B cell (primary cell): ENCODE measurements at regions of chr2 and their contacts with region 1.

Region 1: DNA sequence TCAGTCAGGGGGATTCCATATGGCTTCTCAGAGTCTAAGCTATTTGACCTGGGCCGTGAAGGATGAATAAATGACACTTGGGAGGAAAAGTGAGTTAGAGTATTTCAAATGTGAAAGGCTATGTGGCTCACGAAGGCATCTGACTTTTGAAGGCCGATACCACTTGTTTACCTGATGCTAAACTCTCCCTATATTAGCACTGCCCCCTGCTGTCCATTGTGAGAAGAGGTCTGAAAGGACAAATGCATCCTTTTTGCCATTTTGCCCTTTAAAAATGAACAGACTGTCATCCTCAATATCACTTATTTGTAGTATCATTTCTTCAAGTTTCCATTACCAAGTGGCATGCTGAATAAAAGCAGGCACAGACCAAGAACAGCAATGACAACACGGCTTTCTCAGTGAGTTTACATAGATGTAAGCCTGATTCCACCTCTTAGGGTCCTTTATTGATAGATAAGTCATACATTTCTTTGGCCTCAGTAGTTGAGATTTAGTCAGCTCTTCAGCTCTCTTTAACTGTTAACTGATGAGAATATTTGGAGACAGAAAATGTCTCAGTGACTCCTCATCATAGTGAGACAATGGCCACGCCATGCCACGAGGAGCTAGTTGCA is 40.1 kb downstream of the DOCK10 start:
- DNase-seq: peak; percentile 83
- ATAC-seq: peak; percentile 68
- H3K4me3 ChIP-seq: no peak overlapping the region
- H3K4me3 Mint-ChIP-seq: peak overlapping the region; percentile 53
- H3K27ac ChIP-seq: peak overlapping the region; percentile 22 to 51
- H3K27ac Mint-ChIP-seq: peak overlapping the region; percentile 90
- H3K4me1 ChIP-seq: peaks cover 19% of the 10 kb centered on the region in 2 donors
- H3K4me1 Mint-ChIP-seq: peaks cover 25% of the 10 kb centered on the region
- H3K27me3 ChIP-seq: no peaks in the 10 kb centered on the region
- H3K27me3 Mint-ChIP-seq: no peaks in the 10 kb centered on the region
- CTCF ChIP-seq: peak; percentile 80

Region 2: GRCh38 chr2:224847961-224848850 is 153.9 kb before region 1 on chr2:
- CTCF ChIA-PET with region 1: interaction called, 18 read pairs
- POLR2A ChIA-PET with region 1: no interaction called
- intact Hi-C with region 1: no loop called
- DNase-seq: no peak
- ATAC-seq: no peak
- H3K4me3 ChIP-seq: no peak overlapping the region
- H3K4me3 Mint-ChIP-seq: no peak overlapping the region
- H3K27ac ChIP-seq: no peak overlapping the region
- H3K27ac Mint-ChIP-seq: no peak overlapping the region
- H3K4me1 ChIP-seq: no peaks in the 10 kb centered on the region
- H3K4me1 Mint-ChIP-seq: no peaks in the 10 kb centered on the region
- H3K27me3 ChIP-seq: no peaks in the 10 kb centered on the region
- H3K27me3 Mint-ChIP-seq: no peaks in the 10 kb centered on the region
- CTCF ChIP-seq: no peak

Region 3: GRCh38 chr2:224922142-224922727 is 79.9 kb before region 1 on chr2:
- CTCF ChIA-PET with region 1: interaction called, 124 read pairs
- POLR2A ChIA-PET with region 1: interaction called, 4 read pairs
- intact Hi-C with region 1: no loop called
- DNase-seq: peak; percentile 63
- ATAC-seq: peak; percentile 64
- H3K4me3 ChIP-seq: peak overlapping the region in 1 of 5 experiments; percentile 4
- H3K4me3 Mint-ChIP-seq: peak overlapping the region; percentile 66
- H3K27ac ChIP-seq: peak overlapping the region; percentile 40 to 54
- H3K27ac Mint-ChIP-seq: peak overlapping the region; percentile 84
- H3K4me1 ChIP-seq: peaks cover 64 to 68% of the 10 kb centered on the region in 2 donors
- H3K4me1 Mint-ChIP-seq: peaks cover 55% of the 10 kb centered on the region
- H3K27me3 ChIP-seq: no peaks in the 10 kb centered on the region
- H3K27me3 Mint-ChIP-seq: no peaks in the 10 kb centered on the region
- CTCF ChIP-seq: no peak

Region 4: GRCh38 chr2:224952936-224953657 is 49.0 kb before region 1 on chr2:
- CTCF ChIA-PET with region 1: interaction called, 54 read pairs
- POLR2A ChIA-PET with region 1: interaction called, 4 read pairs
- intact Hi-C with region 1: loop called (anchors 2 kb)
- DNase-seq: peak; percentile 79
- ATAC-seq: peak; percentile 89
- H3K4me3 ChIP-seq: no peak overlapping the region
- H3K4me3 Mint-ChIP-seq: peak overlapping the region; percentile 50
- H3K27ac ChIP-seq: peak overlapping the region; percentile 19 to 52
- H3K27ac Mint-ChIP-seq: peak overlapping the region; percentile 85
- H3K4me1 ChIP-seq: peaks cover 63 to 64% of the 10 kb centered on the region in 2 donors
- H3K4me1 Mint-ChIP-seq: peaks cover 86% of the 10 kb centered on the region
- H3K27me3 ChIP-seq: no peaks in the 10 kb centered on the region
- H3K27me3 Mint-ChIP-seq: no peaks in the 10 kb centered on the region
- CTCF ChIP-seq: no peak

Region 5: GRCh38 chr2:224990710-224991109 is 11.4 kb before region 1 on chr2:
- CTCF ChIA-PET with region 1: interaction called, 29 read pairs
- POLR2A ChIA-PET with region 1: no interaction called
- intact Hi-C with region 1: no loop called
- DNase-seq: no peak
- ATAC-seq: no peak
- H3K4me3 ChIP-seq: no peak overlapping the region
- H3K4me3 Mint-ChIP-seq: no peak overlapping the region
- H3K27ac ChIP-seq: no peak overlapping the region
- H3K27ac Mint-ChIP-seq: no peak overlapping the region
- H3K4me1 ChIP-seq: peaks cover 4 to 11% of the 10 kb centered on the region in 2 donors
- H3K4me1 Mint-ChIP-seq: peaks cover 21% of the 10 kb centered on the region
- H3K27me3 ChIP-seq: no peaks in the 10 kb centered on the region
- H3K27me3 Mint-ChIP-seq: no peaks in the 10 kb centered on the region
- CTCF ChIP-seq: no peak

Region 6: DNA sequence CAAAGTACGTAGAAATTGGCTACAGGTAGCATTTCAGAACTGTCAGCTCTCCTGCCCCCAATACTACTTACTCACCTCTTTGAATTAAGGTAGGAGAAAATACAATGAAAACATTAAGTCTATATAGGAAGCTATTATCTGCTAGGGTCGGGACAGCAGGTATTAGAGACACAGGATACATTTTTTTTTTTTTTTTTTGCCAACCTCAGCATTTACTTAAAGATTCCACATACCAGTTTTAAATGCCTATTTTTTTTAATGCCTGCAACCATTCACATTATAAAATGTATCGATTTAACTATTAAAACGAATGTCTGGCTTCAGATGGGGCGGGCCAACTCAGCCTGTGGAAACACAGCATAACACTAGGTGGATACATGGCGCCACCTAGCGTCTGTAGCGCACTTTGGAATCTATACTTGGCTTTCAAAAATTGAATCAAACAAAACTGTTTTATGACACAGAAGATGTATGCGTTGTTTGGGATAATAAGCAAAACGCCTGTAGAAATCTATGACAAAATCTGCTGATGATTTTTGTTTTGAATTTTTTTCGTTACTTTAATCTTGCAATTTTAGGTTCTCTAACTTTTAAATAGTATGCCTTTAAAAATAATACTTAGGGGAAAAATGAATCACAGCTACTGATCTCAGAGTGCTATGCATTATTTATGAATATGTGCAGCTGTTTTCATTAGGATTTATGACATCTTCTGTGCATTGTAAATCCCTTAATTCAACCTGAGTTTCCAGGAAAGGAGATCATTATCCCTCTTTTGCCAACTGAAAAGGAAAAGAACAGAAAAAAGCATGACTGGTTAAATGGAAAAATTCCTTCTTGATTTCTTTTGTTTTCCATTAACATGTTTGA is 658.4 kb after region 1 on chr2:
- CTCF ChIA-PET with region 1: interaction called, 46 read pairs
- POLR2A ChIA-PET with region 1: no interaction called
- intact Hi-C with region 1: loop called (anchors 1 kb)
- DNase-seq: peak; percentile 75
- ATAC-seq: peak; percentile 71
- H3K4me3 ChIP-seq: no peak overlapping the region
- H3K4me3 Mint-ChIP-seq: no peak overlapping the region
- H3K27ac ChIP-seq: no peak overlapping the region
- H3K27ac Mint-ChIP-seq: no peak overlapping the region
- H3K4me1 ChIP-seq: no peaks in the 10 kb centered on the region
- H3K4me1 Mint-ChIP-seq: no peaks in the 10 kb centered on the region
- H3K27me3 ChIP-seq: peaks cover 0 to 5% (median 0%) of the 10 kb centered on the region in 4 experiments
- H3K27me3 Mint-ChIP-seq: peaks cover 22% of the 10 kb centered on the region
- CTCF ChIP-seq: peak; percentile 97